Endothelial cell of umbilical vein (primary cell): ENCODE measurements at regions of chr19 and their contacts with region 1.

Region 1: GRCh38 chr19:41706741-41707501 is 1.5 kb upstream of the CEACAM5 start:
- DNase-seq: peak; percentile 49
- H3K4me3 ChIP-seq: no peak overlapping the region
- H3K27ac ChIP-seq: no peak overlapping the region
- H3K4me1 ChIP-seq: no peaks in the 10 kb centered on the region
- H3K27me3 ChIP-seq: no peaks in the 10 kb centered on the region
- CTCF ChIP-seq: peak; percentile 78 to 97
- POLR2A ChIP-seq: no peak

Region 2: GRCh38 chr19:41521931-41522555 is 184.9 kb before region 1 on chr19:
- CTCF ChIA-PET with region 1: no interaction called
- POLR2A ChIA-PET with region 1: no interaction called
- dilution Hi-C with region 1: no loop called
- intact Hi-C with region 1: no loop called
- DNase-seq: no peak
- H3K4me3 ChIP-seq: peak overlapping the region in 1 of 3 experiments; percentile 37
- H3K27ac ChIP-seq: no peak overlapping the region
- H3K4me1 ChIP-seq: peaks cover 5% of the 10 kb centered on the region
- H3K27me3 ChIP-seq: peaks cover 41 to 73% of the 10 kb centered on the region in 2 experiments
- CTCF ChIP-seq: no peak
- POLR2A ChIP-seq: no peak

Region 3: DNA sequence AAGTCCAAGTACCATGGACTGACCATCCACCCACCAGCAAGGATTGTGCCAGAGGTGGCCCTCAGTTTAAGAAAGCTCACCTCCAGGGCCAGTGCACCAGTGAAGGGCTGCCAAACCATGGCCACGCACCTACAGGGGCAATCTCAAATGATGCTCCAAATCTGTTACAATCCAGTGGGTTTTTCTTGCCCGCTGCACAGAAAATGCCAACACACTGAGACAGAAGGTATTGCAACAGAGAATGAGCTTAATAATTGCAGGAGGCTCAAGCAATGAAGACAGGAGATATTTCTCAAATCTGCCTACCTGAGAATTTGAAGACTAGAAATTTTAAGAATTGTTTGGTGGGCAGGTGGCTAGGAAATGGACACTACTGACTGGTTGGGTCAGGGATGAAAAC is 40.8 kb before region 1 on chr19:
- CTCF ChIA-PET with region 1: no interaction called
- POLR2A ChIA-PET with region 1: no interaction called
- dilution Hi-C with region 1: no loop called
- intact Hi-C with region 1: no loop called
- DNase-seq: no peak
- H3K4me3 ChIP-seq: no peak overlapping the region
- H3K27ac ChIP-seq: no peak overlapping the region
- H3K4me1 ChIP-seq: no peaks in the 10 kb centered on the region
- H3K27me3 ChIP-seq: no peaks in the 10 kb centered on the region
- CTCF ChIP-seq: no peak
- POLR2A ChIP-seq: no peak

Region 4: DNA sequence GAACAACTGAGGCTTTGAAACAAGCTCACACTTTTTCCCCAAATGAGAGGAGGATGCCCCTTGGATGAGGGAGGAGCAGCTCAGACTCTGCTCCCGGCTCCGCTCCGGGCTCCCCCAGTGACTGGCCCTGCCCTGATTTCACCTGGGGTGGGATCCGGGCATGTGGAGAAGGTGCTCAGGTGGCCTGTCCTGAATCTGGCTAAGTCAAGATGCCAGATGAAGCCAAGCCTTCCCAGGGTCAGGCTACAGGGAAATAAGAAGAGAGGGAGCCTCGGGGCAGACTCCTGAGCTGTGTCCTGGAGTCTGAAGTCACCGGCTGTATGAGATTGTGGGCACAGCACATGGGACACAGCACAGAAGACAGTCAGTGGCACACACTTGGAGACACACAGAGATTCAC is 11.8 kb after region 1 on chr19:
- CTCF ChIA-PET with region 1: interaction called, 18 read pairs
- POLR2A ChIA-PET with region 1: no interaction called
- dilution Hi-C with region 1: no loop called
- intact Hi-C with region 1: no loop called
- DNase-seq: no peak
- H3K4me3 ChIP-seq: no peak overlapping the region
- H3K27ac ChIP-seq: no peak overlapping the region
- H3K4me1 ChIP-seq: no peaks in the 10 kb centered on the region
- H3K27me3 ChIP-seq: no peaks in the 10 kb centered on the region
- CTCF ChIP-seq: no peak
- POLR2A ChIP-seq: no peak

Region 5: GRCh38 chr19:41746593-41747227 is 39.8 kb after region 1 on chr19:
- CTCF ChIA-PET with region 1: interaction called, 4 read pairs
- POLR2A ChIA-PET with region 1: no interaction called
- dilution Hi-C with region 1: no loop called
- intact Hi-C with region 1: loop called (anchors 2 kb)
- DNase-seq: peak; percentile 36
- H3K4me3 ChIP-seq: no peak overlapping the region
- H3K27ac ChIP-seq: no peak overlapping the region
- H3K4me1 ChIP-seq: no peaks in the 10 kb centered on the region
- H3K27me3 ChIP-seq: peaks cover 10 to 12% of the 10 kb centered on the region in 2 experiments
- CTCF ChIP-seq: peak; percentile 22 to 46
- POLR2A ChIP-seq: no peak